CD14-positive monocyte (primary cell): ENCODE measurements at regions of chr5 and their contacts with region 1.

Region 1: GRCh38 chr5:14595189-14595588 is 13.6 kb downstream of the OTULINL start:
- DNase-seq: peak; percentile 55 to 82 (median 80)
- H3K4me3 ChIP-seq: peak overlapping the region in 2 of 3 experiments; percentile 18 to 64
- H3K4me3 Mint-ChIP-seq: peak overlapping the region; percentile 56 to 83
- H3K27ac ChIP-seq: peak overlapping the region; percentile 45 to 91
- H3K27ac Mint-ChIP-seq: peak overlapping the region; percentile 88 to 95 (median 91)
- H3K4me1 ChIP-seq: peaks cover 90 to 99% of the 10 kb centered on the region in 2 donors
- H3K4me1 Mint-ChIP-seq: peaks cover 91% of the 10 kb centered on the region
- H3K27me3 ChIP-seq: no peaks in the 10 kb centered on the region
- H3K27me3 Mint-ChIP-seq: peaks cover 0 to 2% (median 1%) of the 10 kb centered on the region in 3 donors
- CTCF ChIP-seq: no peak

Region 2: DNA sequence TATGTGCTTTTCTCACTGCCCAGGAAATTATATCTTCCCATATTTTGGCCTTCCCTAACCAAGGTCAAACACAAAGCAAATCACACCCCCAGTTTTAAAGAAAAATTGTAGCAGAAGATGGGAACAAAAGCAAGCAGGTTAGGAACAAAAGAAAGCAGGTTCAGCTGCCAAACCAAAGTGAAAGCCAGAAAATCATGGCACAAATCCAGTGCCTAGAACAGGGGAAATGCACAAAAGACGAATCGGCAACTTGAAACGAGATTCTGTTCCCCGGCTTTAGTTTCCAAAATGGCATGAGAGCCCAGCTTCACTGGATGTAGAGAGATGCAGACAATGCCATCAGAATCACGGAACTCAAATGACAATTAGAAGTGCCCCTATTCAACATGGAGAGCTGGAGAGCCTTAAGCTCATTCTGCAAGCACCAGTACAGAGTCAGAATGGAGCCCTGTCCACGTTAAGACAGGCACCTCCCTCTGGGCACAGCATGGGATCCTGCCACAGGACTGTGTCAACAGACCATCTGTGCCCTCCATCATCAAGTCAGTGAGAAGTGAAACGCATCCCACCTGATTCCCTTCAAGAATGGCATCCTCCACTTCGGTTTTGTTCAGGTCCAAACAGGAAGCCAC is 664.5 kb before region 1 on chr5:
- intact Hi-C with region 1: no loop called
- DNase-seq: no peak
- H3K4me3 ChIP-seq: no peak overlapping the region
- H3K4me3 Mint-ChIP-seq: no peak overlapping the region
- H3K27ac ChIP-seq: no peak overlapping the region
- H3K27ac Mint-ChIP-seq: no peak overlapping the region
- H3K4me1 ChIP-seq: no peaks in the 10 kb centered on the region
- H3K4me1 Mint-ChIP-seq: no peaks in the 10 kb centered on the region
- H3K27me3 ChIP-seq: no peaks in the 10 kb centered on the region
- H3K27me3 Mint-ChIP-seq: peaks cover 0 to 4% (median 3%) of the 10 kb centered on the region in 3 donors
- CTCF ChIP-seq: no peak

Region 3: DNA sequence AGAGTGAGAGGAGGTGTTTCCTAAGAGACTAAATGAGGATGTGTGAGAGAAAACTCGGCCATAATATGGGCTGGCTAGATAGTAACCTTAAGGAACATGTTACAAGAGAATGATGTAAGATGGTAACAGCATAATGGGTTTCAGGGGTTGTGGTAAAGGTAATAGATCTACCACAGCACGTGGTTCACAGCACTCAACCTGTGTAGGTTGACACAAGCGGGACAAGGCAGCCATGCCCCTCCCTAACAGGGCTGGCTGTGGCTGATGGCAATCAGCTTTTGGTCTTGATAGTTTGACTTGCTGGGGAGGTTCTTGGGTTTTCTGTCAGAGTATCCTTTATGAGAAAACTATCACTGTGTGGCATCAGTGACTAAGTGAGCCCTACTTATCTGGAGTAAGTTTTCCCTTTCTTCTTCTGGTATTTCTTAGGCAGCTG is 313.4 kb before region 1 on chr5:
- intact Hi-C with region 1: no loop called
- DNase-seq: no peak
- H3K4me3 ChIP-seq: no peak overlapping the region
- H3K4me3 Mint-ChIP-seq: no peak overlapping the region
- H3K27ac ChIP-seq: no peak overlapping the region
- H3K27ac Mint-ChIP-seq: no peak overlapping the region
- H3K4me1 ChIP-seq: peaks cover 0 to under 1% of the 10 kb centered on the region in 2 donors
- H3K4me1 Mint-ChIP-seq: peaks cover 9% of the 10 kb centered on the region
- H3K27me3 ChIP-seq: no peaks in the 10 kb centered on the region
- H3K27me3 Mint-ChIP-seq: no peaks in the 10 kb centered on the region
- CTCF ChIP-seq: no peak

Region 4: DNA sequence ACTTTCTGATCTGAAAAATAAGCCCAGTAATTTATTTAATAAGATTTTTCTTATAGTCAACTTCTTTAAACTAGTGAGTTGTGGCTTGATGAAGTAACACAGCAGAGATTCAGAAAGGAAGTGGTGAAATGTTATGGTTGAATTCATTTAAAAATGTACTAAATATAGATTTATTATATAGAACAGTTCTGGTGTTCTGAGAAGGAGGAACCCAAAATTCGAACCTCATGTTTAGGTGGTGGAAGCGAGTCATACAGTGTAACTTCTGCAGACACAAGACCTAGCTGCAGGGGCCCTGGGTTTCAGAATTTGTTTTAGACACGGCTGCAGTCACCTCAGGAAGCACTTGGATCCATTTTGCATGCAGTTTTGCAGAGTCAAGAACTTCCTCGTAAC is 263.8 kb before region 1 on chr5:
- intact Hi-C with region 1: loop called in 1 of 2 experiments (anchors 10 kb)
- DNase-seq: peak; percentile 52 to 77 (median 66)
- H3K4me3 ChIP-seq: peak overlapping the region; percentile 19 to 75 (median 59)
- H3K4me3 Mint-ChIP-seq: peak overlapping the region; percentile 66 to 89
- H3K27ac ChIP-seq: peak overlapping the region; percentile 73 to 82
- H3K27ac Mint-ChIP-seq: peak overlapping the region; percentile 89 to 97 (median 96)
- H3K4me1 ChIP-seq: peaks cover 56% of the 10 kb centered on the region in 2 donors
- H3K4me1 Mint-ChIP-seq: peaks cover 58% of the 10 kb centered on the region
- H3K27me3 ChIP-seq: no peaks in the 10 kb centered on the region
- H3K27me3 Mint-ChIP-seq: no peaks in the 10 kb centered on the region
- CTCF ChIP-seq: no peak

Region 5: DNA sequence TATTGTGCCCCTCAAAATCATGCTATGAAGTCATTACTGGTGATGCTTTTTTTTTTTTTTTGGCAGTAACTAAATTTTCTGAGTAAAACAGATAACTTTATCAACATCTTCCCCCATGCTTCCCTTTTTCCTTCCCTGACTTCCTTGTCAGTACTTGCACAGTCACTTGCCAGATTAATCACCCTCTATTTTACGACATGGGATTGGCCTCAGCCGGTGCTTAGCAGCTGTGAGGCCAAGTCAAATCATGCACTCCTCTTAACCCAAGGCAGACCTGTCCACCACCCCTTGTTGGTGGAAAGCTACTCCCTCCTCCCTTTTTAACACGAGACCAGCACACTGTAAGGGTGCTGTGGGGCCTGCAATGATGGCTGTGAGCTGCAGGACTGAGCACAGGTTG is 131.6 kb before region 1 on chr5:
- intact Hi-C with region 1: loop called in 1 of 2 experiments (anchors 10 kb)
- DNase-seq: peak; percentile 88 to 90 (median 89)
- H3K4me3 ChIP-seq: peak overlapping the region in 1 of 3 experiments; percentile 17
- H3K4me3 Mint-ChIP-seq: peak overlapping the region in 1 of 2 donors; percentile 51
- H3K27ac ChIP-seq: peak overlapping the region; percentile 94 to 98
- H3K27ac Mint-ChIP-seq: peak overlapping the region; percentile 93 to 98 (median 94)
- H3K4me1 ChIP-seq: peaks cover 34 to 38% of the 10 kb centered on the region in 2 donors
- H3K4me1 Mint-ChIP-seq: peaks cover 33% of the 10 kb centered on the region
- H3K27me3 ChIP-seq: no peaks in the 10 kb centered on the region
- H3K27me3 Mint-ChIP-seq: peaks cover 0 to 1% (median 0%) of the 10 kb centered on the region in 3 donors
- CTCF ChIP-seq: no peak

Region 6: GRCh38 chr5:14529004-14529403 is 66.2 kb before region 1 on chr5:
- intact Hi-C with region 1: loop called in 1 of 2 experiments (anchors 5 kb)
- DNase-seq: no peak
- H3K4me3 ChIP-seq: no peak overlapping the region
- H3K4me3 Mint-ChIP-seq: no peak overlapping the region
- H3K27ac ChIP-seq: no peak overlapping the region
- H3K27ac Mint-ChIP-seq: peak overlapping the region in 1 of 7 donors; percentile 13
- H3K4me1 ChIP-seq: peaks cover 5 to 6% of the 10 kb centered on the region in 2 donors
- H3K4me1 Mint-ChIP-seq: peaks cover 7% of the 10 kb centered on the region
- H3K27me3 ChIP-seq: no peaks in the 10 kb centered on the region
- H3K27me3 Mint-ChIP-seq: peaks cover 0 to 5% (median 0%) of the 10 kb centered on the region in 3 donors
- CTCF ChIP-seq: no peak

Region 7: DNA sequence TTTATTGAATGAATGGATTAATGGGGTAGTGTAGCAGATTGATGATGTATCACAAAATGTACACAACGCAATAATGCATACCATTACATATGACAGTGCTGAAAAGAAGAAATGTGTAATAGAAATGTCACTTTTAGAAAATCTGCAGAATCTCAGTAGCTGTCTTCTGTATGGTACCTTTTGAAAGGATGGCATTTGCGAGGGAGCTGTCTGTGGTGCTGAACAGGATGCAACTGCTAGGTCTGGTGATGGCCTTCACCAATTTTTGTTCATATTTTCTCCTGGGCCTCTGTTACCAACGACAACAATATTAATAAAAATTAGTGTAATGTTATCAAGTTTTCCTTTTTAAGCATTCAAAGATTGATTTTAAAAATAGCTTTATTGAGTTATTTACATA is 33.2 kb after region 1 on chr5:
- intact Hi-C with region 1: no loop called
- DNase-seq: no peak
- H3K4me3 ChIP-seq: no peak overlapping the region
- H3K4me3 Mint-ChIP-seq: no peak overlapping the region
- H3K27ac ChIP-seq: no peak overlapping the region
- H3K27ac Mint-ChIP-seq: no peak overlapping the region
- H3K4me1 ChIP-seq: peaks cover 9 to 14% of the 10 kb centered on the region in 2 donors
- H3K4me1 Mint-ChIP-seq: peaks cover 11% of the 10 kb centered on the region
- H3K27me3 ChIP-seq: no peaks in the 10 kb centered on the region
- H3K27me3 Mint-ChIP-seq: peaks cover 1 to 2% (median 1%) of the 10 kb centered on the region in 3 donors
- CTCF ChIP-seq: no peak

Region 8: GRCh38 chr5:14706615-14707021 is 111.4 kb after region 1 on chr5:
- intact Hi-C with region 1: no loop called
- DNase-seq: no peak
- H3K4me3 ChIP-seq: no peak overlapping the region
- H3K4me3 Mint-ChIP-seq: no peak overlapping the region
- H3K27ac ChIP-seq: no peak overlapping the region
- H3K27ac Mint-ChIP-seq: peak overlapping the region in 1 of 7 donors; percentile 57
- H3K4me1 ChIP-seq: no peaks in the 10 kb centered on the region
- H3K4me1 Mint-ChIP-seq: peaks cover under 1% of the 10 kb centered on the region
- H3K27me3 ChIP-seq: no peaks in the 10 kb centered on the region
- H3K27me3 Mint-ChIP-seq: peaks cover 0 to 5% (median 0%) of the 10 kb centered on the region in 3 donors
- CTCF ChIP-seq: no peak